ENCODE measurements at regions of chr2 and their contacts with region 1.

Region 1: DNA sequence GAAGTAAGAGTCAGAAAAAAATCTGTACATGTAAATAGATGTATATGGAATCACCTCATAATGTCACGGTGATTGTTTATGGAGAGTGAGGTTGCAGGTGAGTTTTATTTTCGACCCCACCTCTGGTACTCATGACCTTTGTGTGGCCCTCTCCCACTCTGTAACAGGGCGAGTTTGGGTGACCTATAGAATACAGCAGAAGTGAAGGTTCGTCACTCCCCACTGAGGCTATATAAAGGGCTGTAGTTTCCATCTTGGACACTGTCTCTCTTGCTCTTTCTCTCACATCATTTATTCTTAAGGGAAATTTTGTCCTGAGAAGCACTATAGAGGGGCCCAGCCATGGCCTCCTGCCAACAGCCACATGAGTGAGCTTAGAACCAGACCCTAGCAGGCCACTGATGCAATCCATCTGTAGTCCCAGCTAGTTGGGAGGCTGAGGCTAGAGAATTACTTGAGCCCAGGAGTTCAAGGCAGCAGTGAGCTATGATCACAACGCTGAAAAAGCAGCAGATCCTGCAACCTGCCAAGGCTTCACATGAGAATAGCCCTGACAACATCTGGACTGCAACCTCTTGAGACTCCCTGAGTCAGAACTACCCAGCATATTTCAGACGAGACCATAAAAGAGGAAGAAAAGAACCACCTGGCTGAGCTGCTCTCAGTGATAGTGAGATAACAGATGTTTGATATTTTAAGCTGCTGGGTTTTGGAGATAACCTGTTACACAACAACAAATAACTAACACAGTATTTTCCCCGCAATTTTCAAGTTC is 74.3 kb upstream of the SLC1A4 start:
- DNase-seq: no peak
- H3K4me3 ChIP-seq: no peak overlapping the region
- H3K27ac ChIP-seq: no peak overlapping the region
- H3K4me1 ChIP-seq: peaks cover 3 to 7% (median 6%) of the 10 kb centered on the region in 4 donors
- H3K27me3 ChIP-seq: no peaks in the 10 kb centered on the region
- CTCF ChIP-seq: no peak
- EP300 ChIP-seq: no peak
- POLR2A ChIP-seq: no peak

Region 2: DNA sequence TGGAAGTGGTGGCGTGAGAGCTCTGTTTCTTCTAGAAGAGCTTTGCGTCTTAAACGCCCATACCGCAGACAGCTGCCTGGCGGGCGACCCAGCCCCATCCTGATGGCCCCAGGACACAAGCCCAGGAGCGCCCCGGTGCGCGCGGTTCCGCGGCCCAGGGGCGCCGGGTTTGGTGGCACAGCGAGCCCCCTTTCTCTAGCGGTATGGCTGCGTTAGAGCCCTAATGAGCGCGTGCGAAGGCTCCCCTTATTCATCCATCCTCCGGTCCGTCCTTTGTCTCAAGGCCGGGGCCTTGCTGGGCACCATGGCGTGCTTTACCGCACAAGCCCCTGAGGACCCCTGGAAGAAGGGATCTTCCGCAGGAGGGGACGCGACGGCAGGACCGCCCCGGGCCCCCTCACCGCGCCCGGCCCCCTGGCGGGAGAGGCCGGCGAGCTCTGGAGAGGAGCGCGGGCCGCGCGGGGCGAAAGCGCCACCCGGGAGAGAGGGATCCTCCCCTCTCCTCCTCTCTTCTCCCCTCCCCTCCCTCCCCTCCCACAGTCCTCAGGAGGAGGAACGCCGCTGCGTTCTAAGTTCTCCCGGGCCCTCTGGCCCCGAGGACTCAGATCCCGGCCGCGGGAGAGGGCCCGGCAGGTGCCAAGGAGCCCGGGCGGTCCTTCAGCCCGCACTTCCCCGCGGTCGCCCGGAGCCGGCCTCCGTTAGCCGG is 73.7 kb after region 1 on chr2:
- intact Hi-C with region 1: loop called (anchors 2 kb)
- DNase-seq: peak; percentile 93
- H3K4me3 ChIP-seq: peak overlapping the region; percentile 66 to 92 (median 85)
- H3K27ac ChIP-seq: peak overlapping the region; percentile 94 to 99 (median 96)
- H3K4me1 ChIP-seq: peaks cover 17 to 46% (median 37%) of the 10 kb centered on the region in 4 donors
- H3K27me3 ChIP-seq: no peaks in the 10 kb centered on the region
- CTCF ChIP-seq: peak; percentile 20 to 53 (median 39)
- EP300 ChIP-seq: no peak
- POLR2A ChIP-seq: peak; percentile 67

Region 3: GRCh38 chr2:65040400-65041261 is 125.7 kb after region 1 on chr2:
- intact Hi-C with region 1: loop called (anchors 2 kb)
- DNase-seq: peak; percentile 96
- H3K4me3 ChIP-seq: peak overlapping the region in 3 of 4 donors; percentile 23 to 33 (median 30)
- H3K27ac ChIP-seq: no peak overlapping the region
- H3K4me1 ChIP-seq: peaks cover 4 to 6% (median 4%) of the 10 kb centered on the region in 4 donors
- H3K27me3 ChIP-seq: no peaks in the 10 kb centered on the region
- CTCF ChIP-seq: peak in 2 of 3 experiments; percentile 97 to 98
- EP300 ChIP-seq: no peak
- POLR2A ChIP-seq: no peak

Region 4: GRCh38 chr2:65164426-65164891 is 249.5 kb after region 1 on chr2:
- intact Hi-C with region 1: loop called (anchors 10 kb)
- DNase-seq: no peak
- H3K4me3 ChIP-seq: no peak overlapping the region
- H3K27ac ChIP-seq: peak overlapping the region; percentile 42 to 66 (median 58)
- H3K4me1 ChIP-seq: peaks cover 9 to 21% (median 16%) of the 10 kb centered on the region in 4 donors
- H3K27me3 ChIP-seq: no peaks in the 10 kb centered on the region
- CTCF ChIP-seq: no peak
- EP300 ChIP-seq: no peak
- POLR2A ChIP-seq: no peak

Region 5: GRCh38 chr2:65186872-65187851 is 272.2 kb after region 1 on chr2:
- intact Hi-C with region 1: loop called (anchors 5 kb)
- DNase-seq: peak; percentile 92
- H3K4me3 ChIP-seq: no peak overlapping the region
- H3K27ac ChIP-seq: no peak overlapping the region
- H3K4me1 ChIP-seq: peaks cover 0 to 10% (median 6%) of the 10 kb centered on the region in 4 donors
- H3K27me3 ChIP-seq: no peaks in the 10 kb centered on the region
- CTCF ChIP-seq: peak; percentile 79 to 88 (median 79)
- EP300 ChIP-seq: no peak
- POLR2A ChIP-seq: no peak